ENCODE measurements at regions of chr18 and their contacts with region 1.

Region 1: DNA sequence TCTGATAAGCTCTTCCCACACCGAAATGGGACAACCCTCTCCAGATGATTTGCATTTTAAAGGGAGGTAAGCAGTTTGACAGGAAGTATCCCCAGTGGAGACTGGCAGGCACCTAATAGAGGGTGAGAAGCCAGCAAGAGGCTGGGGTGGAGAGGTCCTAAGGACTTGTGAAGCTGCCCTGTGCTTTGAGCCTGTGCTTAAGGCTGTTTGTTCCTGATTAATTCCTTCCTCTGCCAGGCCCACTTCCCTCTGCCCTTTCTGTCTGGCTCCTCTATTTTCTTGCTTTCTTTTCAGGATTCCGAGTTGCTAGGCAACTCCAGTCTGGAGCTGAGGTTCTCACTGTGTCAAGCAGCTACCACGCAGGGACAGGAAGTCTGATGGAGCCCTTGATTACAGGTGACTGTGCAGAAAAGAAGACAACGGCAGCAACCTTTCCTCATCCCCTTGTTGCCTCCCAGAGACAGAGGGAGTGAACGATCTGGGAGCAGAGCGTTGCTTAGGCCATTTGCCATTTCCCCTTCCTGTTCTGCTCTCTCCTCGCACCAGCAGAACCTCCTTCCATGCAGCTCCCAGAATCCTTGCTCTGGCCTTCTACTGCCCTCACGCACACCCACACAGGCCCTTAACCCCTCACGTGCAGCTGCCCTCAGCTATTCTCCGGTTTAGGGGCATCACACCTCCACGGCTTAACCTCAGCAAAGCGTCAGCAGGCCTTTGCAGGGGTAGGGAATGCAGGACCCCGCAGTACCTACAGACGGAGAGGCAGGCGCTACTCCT is 103.6 kb upstream of the CELF4 start:
- DNase-seq: no peak
- ATAC-seq: peak; percentile 21
- H3K4me3 ChIP-seq: 0 out of 2 replicates have a peak overlapping the region, but pooled peaks have one; percentile 15
- H3K27ac ChIP-seq: peak overlapping the region; percentile 45; the same call in 2 of the 3 replicates
- H3K4me1 ChIP-seq: peaks cover 5 to 7% of the 10 kb centered on the region in 2 experiments; a peak in 4 of 5 replicates
- H3K27me3 ChIP-seq: no peaks in the 10 kb centered on the region
- CTCF ChIP-seq: no peak
- EP300 ChIP-seq: no peak
- POLR2A ChIP-seq: no peak
- RAD21 ChIP-seq: no peak

Region 2: DNA sequence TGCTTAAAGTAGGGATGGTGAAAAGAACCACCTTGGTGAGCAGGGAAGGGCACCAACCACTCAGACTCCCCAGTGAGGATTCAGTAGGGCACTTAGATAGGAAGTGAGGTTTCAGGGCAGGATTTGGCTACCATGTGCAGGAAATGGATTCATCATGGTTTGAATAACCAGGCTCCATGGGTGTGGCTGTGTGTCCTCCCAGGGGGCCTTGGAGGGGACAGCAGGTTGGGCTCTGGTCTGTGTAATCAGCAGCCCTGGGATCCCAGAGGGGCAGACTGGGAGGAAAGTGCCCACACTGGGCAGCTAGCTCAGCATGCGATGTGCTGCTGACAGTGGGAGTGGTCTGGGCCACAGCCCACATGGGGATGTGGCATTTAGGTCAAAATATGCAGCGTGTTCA is 328.1 kb before region 1 on chr18:
- CTCF ChIA-PET with region 1: no interaction called
- POLR2A ChIA-PET with region 1: no interaction called
- in situ Hi-C with region 1: no loop called
- intact Hi-C with region 1: loop called (anchors 5 kb)
- DNase-seq: no peak
- ATAC-seq: no peak
- H3K4me3 ChIP-seq: no peak overlapping the region
- H3K27ac ChIP-seq: no peak overlapping the region
- H3K4me1 ChIP-seq: no peaks in the 10 kb centered on the region
- H3K27me3 ChIP-seq: peaks cover 0 to 10% of the 10 kb centered on the region in 2 experiments; a peak in 1 of 5 replicates
- CTCF ChIP-seq: no peak
- EP300 ChIP-seq: no peak
- POLR2A ChIP-seq: no peak
- RAD21 ChIP-seq: no peak

Region 3: DNA sequence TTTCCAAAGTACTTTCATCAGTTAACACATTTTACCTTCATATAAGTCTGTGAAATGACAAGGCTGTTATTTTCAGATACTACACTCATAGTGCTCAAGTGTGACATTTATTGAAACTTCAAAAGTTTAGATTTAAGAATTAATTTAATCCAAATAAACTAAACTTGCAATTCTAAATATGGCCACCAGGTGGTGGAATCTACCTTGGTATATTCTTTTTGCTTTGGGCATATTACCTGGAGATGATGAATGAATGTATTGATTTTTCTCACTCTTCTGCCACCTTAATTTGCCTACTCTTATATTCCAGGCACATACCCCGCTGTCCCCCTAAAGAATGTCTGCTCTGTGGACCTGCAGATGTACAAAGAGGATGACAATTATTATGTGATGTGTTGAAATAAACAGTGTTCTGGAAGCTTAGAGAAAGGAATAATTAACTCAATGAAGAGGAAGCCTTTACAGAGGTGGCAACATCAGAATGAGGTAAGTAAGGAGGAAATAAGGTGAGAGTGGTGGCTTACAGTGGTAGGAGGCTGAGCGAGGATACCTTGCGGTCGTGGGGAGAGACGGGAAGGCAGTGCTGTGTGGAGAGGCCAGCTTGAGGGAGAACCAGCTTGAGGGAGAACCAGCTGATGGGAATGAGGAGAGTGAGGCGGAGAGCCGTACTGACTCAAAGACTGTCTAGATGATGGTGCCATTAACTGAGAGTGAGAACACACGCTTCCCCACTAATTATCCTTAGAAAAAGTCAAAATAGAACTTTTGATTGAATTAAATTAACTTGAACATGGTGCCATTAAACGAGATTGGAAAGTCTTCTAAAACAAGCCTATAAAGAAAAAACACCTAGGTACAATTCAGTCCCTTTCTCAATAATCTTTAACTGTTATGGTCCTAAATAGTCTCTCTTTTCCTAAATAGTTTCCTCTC is 283.0 kb before region 1 on chr18:
- CTCF ChIA-PET with region 1: no interaction called
- POLR2A ChIA-PET with region 1: no interaction called
- in situ Hi-C with region 1: no loop called
- intact Hi-C with region 1: no loop called
- DNase-seq: peak; percentile 28 to 58 (median 37)
- ATAC-seq: no peak
- H3K4me3 ChIP-seq: no peak overlapping the region
- H3K27ac ChIP-seq: no peak overlapping the region
- H3K4me1 ChIP-seq: no peaks in the 10 kb centered on the region
- H3K27me3 ChIP-seq: no peaks in the 10 kb centered on the region; a peak in 1 of 5 replicates
- CTCF ChIP-seq: peak; percentile 49 to 82 (median 60); a peak in 4 of 6 replicates
- EP300 ChIP-seq: no peak
- POLR2A ChIP-seq: no peak
- RAD21 ChIP-seq: peak; percentile 73 to 86

Region 4: DNA sequence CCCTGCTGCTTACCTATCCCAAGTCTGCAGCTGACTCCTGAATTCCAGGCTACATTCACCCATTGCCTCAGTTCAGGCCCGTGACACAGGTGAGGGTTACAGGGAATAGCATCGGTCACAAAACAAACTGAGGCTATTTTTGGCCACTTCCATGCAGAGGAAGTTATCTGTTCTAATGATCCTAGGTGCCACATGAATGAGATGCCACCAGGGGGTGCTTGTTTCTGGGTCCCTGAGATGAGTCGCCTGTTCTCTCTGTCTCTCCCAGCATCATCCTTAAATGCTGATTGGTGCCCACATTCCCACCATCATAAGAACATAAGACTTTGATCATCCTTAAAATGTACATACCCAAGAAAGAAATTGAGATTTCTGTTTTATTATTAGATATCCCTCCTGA is 15.4 kb after region 1 on chr18:
- CTCF ChIA-PET with region 1: no interaction called
- POLR2A ChIA-PET with region 1: interaction called, 14 read pairs
- in situ Hi-C with region 1: no loop called
- intact Hi-C with region 1: no loop called
- DNase-seq: no peak
- ATAC-seq: no peak
- H3K4me3 ChIP-seq: no peak overlapping the region
- H3K27ac ChIP-seq: no peak overlapping the region
- H3K4me1 ChIP-seq: peaks cover 0 to 3% of the 10 kb centered on the region in 2 experiments; a peak in 1 of 5 replicates
- H3K27me3 ChIP-seq: no peaks in the 10 kb centered on the region
- CTCF ChIP-seq: no peak
- EP300 ChIP-seq: no peak
- POLR2A ChIP-seq: no peak
- RAD21 ChIP-seq: no peak

Measured in K562 (cell line).